Left colon (tissue), 2 donors: ENCODE measurements at regions of chr9 and their contacts with region 1.

Region 1: DNA sequence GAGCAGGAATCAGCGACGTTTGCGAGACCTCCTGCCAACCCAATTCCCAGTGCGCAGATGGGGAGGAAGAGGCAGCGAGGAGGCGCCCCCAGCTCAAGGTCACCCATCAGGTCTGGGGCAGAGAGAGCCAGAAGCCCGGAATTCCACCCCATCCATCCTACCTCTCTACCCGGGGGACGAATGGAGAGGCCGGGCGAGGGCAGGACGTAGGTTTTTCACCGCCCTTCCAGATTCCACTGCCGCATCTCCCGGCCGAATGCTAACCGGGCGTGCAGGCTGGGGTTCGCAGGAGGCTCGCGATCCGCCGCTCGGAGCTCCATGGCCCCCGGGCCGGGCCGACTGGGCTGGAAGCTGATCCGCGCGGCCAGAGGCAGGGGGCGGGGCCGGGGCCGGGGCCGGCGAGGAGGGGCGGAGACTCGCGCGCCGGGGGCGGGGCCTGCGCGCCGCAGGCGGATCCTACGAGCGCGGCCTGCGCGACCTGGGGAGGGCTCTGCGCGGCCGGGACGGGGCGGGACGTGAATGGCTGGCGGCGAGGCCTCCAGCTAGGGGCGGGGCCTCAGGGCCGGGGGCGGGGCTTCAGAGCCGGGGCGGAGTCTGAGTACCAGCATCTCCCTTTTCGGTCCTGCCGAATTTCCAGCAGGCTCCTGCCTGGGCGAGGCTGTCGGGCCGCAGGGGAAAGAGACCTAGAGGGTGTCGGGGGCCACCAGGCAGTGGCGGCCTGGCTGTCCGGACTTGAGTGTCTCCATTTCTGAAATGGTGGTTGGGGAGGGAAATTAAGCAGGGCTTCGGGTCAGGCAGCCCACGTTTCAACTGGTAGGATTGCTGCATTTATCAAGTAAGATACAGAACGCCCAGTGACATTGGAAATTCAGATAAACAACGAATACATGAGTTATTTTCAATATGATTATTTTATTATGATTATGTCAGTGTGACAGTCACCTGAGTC is at the start of gene ST6GALNAC4:
- DNase-seq: peak; percentile 92 to 95
- ATAC-seq: peak; percentile 71
- total RNA-seq, gene ST6GALNAC4: 37.5 to 46.9 TPM

Region 2: GRCh38 chr9:127586537-127586936 is 330.4 kb before region 1 on chr9:
- intact Hi-C with region 1: loop called in 1 of 2 experiments (anchors 10 kb)
- DNase-seq: peak; percentile 82 to 87
- ATAC-seq: peak; percentile 66

Region 3: GRCh38 chr9:127715394-127716337 is 201.3 kb before region 1 on chr9 and contains the starts of genes PTRH1 and TTC16:
- intact Hi-C with region 1: no loop called
- DNase-seq: peak; percentile 96 to 98
- ATAC-seq: peak; percentile 97
- total RNA-seq, gene PTRH1: 5.5 to 8.3 TPM
- total RNA-seq, gene TTC16: 0.08 TPM in 1 of 2 donors, not detected in the other

Region 4: DNA sequence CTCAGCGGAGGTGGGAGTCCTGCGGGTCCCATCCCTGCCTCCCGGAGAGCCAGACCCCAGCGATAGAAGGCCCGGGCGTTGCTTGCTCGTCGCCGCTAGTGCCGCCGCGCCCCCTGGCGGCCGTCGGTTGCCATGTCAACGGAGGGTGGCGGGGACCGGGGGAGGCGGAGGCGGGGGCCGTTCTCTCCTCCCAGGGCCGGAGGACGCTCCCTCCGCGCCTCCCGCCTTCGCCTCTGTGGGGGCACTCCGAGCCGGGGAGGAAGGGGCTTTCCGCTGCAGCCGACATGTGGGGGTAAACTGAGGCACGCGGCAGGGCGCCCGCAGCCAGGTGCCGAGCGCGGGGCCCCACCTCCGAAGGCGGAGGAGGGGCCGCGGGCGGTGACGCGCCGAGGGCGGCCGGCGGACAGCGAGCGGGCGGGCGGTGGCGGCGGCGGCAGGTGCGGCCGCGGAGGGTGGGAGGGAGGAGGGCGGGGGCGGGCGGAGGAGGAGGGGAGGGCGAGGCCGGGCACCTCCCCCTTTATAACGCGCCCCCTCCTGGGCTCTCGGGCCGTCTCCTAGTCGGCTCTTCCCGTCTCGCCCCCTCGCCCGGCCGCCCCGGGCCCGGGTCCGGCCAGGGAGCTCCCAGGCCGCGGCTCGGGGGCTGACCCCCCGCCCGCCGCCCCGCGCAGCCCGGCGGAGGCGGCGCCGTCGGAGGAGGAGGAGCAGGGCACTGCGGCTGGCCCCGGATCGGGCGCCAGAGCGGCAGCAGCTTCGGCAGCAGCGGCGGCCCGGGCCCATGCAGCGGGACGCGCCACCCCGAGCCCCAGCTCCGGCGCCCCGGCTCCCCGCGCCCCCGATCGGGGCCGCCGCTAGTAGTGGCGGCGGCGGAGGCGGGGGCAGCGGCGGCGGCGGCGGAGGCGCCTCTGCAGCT is 131.7 kb before region 1 on chr9:
- intact Hi-C with region 1: loop called in 1 of 2 experiments (anchors 10 kb)
- DNase-seq: peak; percentile 78 to 89
- ATAC-seq: peak; percentile 75